ENCODE measurements at regions of chr6 and their contacts with region 1.

Region 1: DNA sequence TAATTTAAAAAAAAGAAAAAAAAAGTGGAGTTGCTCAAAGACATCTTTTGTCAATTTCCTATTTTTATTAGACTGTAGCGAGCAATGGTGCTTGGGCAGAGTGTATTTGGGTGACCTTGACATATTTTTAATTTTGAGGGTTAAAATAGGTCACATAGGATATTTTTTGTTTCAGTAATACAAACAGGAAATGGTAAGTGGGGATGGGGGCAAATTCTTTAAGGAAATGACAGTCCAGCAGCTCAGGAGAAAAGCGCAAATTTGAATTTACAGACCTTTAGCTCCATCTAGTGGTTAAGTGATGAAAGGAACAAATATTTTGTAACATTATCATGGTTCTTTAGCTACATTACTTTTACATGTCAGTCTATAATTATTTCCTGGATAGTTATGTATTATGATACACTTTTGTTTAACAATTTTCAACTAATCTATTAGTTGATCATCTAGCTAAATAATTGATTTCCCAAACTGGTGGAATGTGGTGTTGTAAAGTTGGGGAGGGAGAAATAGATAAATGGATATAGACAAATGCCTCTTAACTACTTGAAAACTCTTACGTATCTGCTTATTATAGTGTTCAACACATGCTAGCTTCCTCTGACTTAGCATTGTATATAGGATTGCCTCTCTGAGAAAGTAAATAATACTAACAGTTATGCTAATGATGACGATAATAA is 10.0 kb downstream of the CITED2 start:
- DNase-seq: peak; percentile 28 to 71 (median 57)
- H3K4me3 ChIP-seq: no peak overlapping the region
- H3K4me3 Mint-ChIP-seq: peak overlapping the region in 1 of 2 donors; percentile 55
- H3K27ac ChIP-seq: no peak overlapping the region
- H3K27ac Mint-ChIP-seq: peak overlapping the region in 3 of 7 donors; percentile 33 to 83 (median 61)
- H3K4me1 ChIP-seq: peaks cover 16 to 32% of the 10 kb centered on the region in 2 donors
- H3K4me1 Mint-ChIP-seq: peaks cover 31% of the 10 kb centered on the region
- H3K27me3 ChIP-seq: no peaks in the 10 kb centered on the region
- H3K27me3 Mint-ChIP-seq: no peaks in the 10 kb centered on the region
- CTCF ChIP-seq: peak; percentile 85

Region 2: GRCh38 chr6:138817822-138818308 is 546.6 kb before region 1 on chr6:
- intact Hi-C with region 1: loop called (anchors 10 kb)
- DNase-seq: no peak
- H3K4me3 ChIP-seq: no peak overlapping the region
- H3K4me3 Mint-ChIP-seq: no peak overlapping the region
- H3K27ac ChIP-seq: no peak overlapping the region
- H3K27ac Mint-ChIP-seq: no peak overlapping the region
- H3K4me1 ChIP-seq: peaks cover 7 to 9% of the 10 kb centered on the region in 2 donors
- H3K4me1 Mint-ChIP-seq: peaks cover 14% of the 10 kb centered on the region
- H3K27me3 ChIP-seq: no peaks in the 10 kb centered on the region
- H3K27me3 Mint-ChIP-seq: peaks cover 0 to 3% (median 0%) of the 10 kb centered on the region in 3 donors
- CTCF ChIP-seq: no peak

Region 3: GRCh38 chr6:139047677-139048076 is 316.8 kb before region 1 on chr6:
- intact Hi-C with region 1: no loop called
- DNase-seq: no peak
- H3K4me3 ChIP-seq: no peak overlapping the region
- H3K4me3 Mint-ChIP-seq: no peak overlapping the region
- H3K27ac ChIP-seq: no peak overlapping the region
- H3K27ac Mint-ChIP-seq: no peak overlapping the region
- H3K4me1 ChIP-seq: no peaks in the 10 kb centered on the region
- H3K4me1 Mint-ChIP-seq: no peaks in the 10 kb centered on the region
- H3K27me3 ChIP-seq: no peaks in the 10 kb centered on the region
- H3K27me3 Mint-ChIP-seq: no peaks in the 10 kb centered on the region
- CTCF ChIP-seq: no peak

Region 4: DNA sequence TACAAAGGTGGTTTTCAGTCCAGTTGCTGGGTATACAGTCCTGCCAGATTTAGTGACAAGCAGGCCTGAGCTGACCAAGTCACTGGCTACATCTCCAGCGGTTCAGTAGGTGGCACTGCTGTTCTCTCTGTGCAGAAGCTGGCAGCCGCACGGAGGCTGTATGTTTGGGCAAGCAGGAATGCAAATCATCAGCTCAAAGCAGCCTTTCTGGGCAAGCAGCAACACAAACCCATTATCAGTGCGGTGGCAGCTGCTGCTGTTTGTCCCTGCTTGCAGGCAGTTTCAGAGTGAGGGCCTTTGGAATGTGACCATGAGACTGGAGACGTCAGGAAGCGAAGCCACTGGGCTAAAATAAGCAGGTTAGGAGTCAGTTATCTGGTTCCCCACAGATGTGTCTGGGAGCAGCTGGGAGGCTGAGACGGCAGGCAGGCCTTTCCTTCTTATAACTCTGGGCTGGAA is 145.1 kb before region 1 on chr6:
- intact Hi-C with region 1: loop called (anchors 2 kb)
- DNase-seq: peak; percentile 67 to 74 (median 69)
- H3K4me3 ChIP-seq: no peak overlapping the region
- H3K4me3 Mint-ChIP-seq: peak overlapping the region; percentile 55 to 80
- H3K27ac ChIP-seq: no peak overlapping the region
- H3K27ac Mint-ChIP-seq: peak overlapping the region in 2 of 7 donors; percentile 50 to 85
- H3K4me1 ChIP-seq: peaks cover 3 to 6% of the 10 kb centered on the region in 2 donors
- H3K4me1 Mint-ChIP-seq: peaks cover 4% of the 10 kb centered on the region
- H3K27me3 ChIP-seq: no peaks in the 10 kb centered on the region
- H3K27me3 Mint-ChIP-seq: no peaks in the 10 kb centered on the region
- CTCF ChIP-seq: peak; percentile 79

Region 5: GRCh38 chr6:139291813-139292619 is 72.4 kb before region 1 on chr6 and contains the start of gene TXLNB:
- intact Hi-C with region 1: loop called in 1 of 2 experiments (anchors 10 kb)
- DNase-seq: peak; percentile 50 to 93 (median 59)
- H3K4me3 ChIP-seq: peak within 1 kb of the TSS in 2 of 3 experiments; percentile 38 to 56
- H3K4me3 Mint-ChIP-seq: peak within 1 kb of the TSS; percentile 68 to 84
- H3K27ac ChIP-seq: peak within 1 kb of the TSS; percentile 82 to 94
- H3K27ac Mint-ChIP-seq: peak within 1 kb of the TSS; percentile 96 to 98 (median 97)
- H3K4me1 ChIP-seq: peaks cover 43 to 51% of the 10 kb centered on the region in 2 donors
- H3K4me1 Mint-ChIP-seq: peaks cover 48% of the 10 kb centered on the region
- H3K27me3 ChIP-seq: no peaks in the 10 kb centered on the region
- H3K27me3 Mint-ChIP-seq: peaks cover 0 to 1% (median 0%) of the 10 kb centered on the region in 3 donors
- CTCF ChIP-seq: no peak
- polyA plus RNA-seq, gene TXLNB: 0.04 to 0.25 (median 0.14) TPM

Region 6: GRCh38 chr6:139323511-139324300 is 40.7 kb before region 1 on chr6:
- intact Hi-C with region 1: loop called in 1 of 2 experiments (anchors 5 kb)
- DNase-seq: peak; percentile 88 to 94 (median 94)
- H3K4me3 ChIP-seq: peak overlapping the region; percentile 37 to 75 (median 63)
- H3K4me3 Mint-ChIP-seq: peak overlapping the region; percentile 77 to 84
- H3K27ac ChIP-seq: peak overlapping the region; percentile 93 to 98
- H3K27ac Mint-ChIP-seq: peak overlapping the region; percentile 94 to 99 (median 99)
- H3K4me1 ChIP-seq: peaks cover 51 to 54% of the 10 kb centered on the region in 2 donors
- H3K4me1 Mint-ChIP-seq: peaks cover 51% of the 10 kb centered on the region
- H3K27me3 ChIP-seq: no peaks in the 10 kb centered on the region
- H3K27me3 Mint-ChIP-seq: peaks cover 0 to 1% (median 0%) of the 10 kb centered on the region in 3 donors
- CTCF ChIP-seq: no peak

Measured in CD14-positive monocyte (primary cell).